Heart left ventricle (tissue), 16 donors: ENCODE measurements at regions of chr17 and their contacts with region 1.

Region 1: GRCh38 chr17:6098050-6098822 is 28.1 kb downstream of the WSCD1 start:
- DNase-seq: peak in 4 of 5 donors; percentile 41 to 70 (median 61)
- ATAC-seq: peak; percentile 81 to 97 (median 86)
- H3K4me3 ChIP-seq: no peak overlapping the region
- H3K27ac ChIP-seq: peak overlapping the region in 11 of 12 donors; percentile 43 to 81 (median 71)
- H3K4me1 ChIP-seq: peaks cover 0 to 31% (median 8%) of the 10 kb centered on the region in 12 donors
- H3K27me3 ChIP-seq: peaks cover 0 to 4% (median 0%) of the 10 kb centered on the region in 9 donors
- CTCF ChIP-seq: no peak
- POLR2A ChIP-seq: no peak

Region 2: DNA sequence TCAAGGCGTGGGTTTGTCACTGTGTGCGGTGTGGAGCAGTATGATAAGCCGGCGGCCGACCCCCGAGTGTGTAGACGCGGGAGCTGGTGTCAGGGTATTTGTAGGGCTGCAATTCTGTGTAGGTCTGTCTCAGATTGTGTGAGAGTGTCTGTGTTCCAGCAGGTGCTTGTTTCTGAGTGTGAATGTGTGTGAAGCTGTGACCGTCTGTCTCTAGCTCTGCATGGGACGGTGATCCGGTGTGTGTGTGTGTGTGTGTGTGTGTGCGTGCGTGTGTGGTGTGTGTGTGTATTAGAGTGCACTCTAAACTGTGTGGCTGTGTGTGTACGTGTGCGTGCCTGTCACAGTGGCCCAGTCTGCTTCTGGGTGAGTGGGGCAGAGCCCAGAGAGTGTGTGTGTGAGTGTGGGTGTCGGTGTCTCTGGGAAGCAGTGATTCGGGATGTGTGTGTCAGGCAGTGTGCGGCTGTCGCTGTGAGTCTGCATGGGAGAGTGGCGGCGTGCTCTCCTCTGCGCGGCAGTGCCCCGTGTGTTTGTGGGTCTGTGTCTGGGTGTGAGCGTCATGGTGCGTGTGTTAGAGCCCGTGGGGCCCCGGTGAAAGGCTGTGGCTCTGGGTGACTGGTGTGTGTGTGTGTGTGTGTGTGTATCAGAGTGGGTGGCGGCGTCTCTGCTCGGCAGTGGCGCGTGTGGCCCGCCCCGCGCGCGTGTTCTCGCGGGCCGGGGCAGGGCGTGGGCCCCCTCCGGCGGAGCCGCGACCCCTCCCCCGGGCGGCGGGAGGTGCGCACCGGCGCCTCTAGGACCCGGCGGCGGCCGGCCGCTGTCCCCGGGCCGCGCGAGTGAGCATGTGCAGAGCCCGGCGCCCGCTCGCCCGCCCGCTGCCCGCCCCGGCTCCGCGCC is 28.5 kb before region 1 on chr17 and contains the start of gene WSCD1:
- intact Hi-C with region 1: loop called in 1 of 10 experiments (anchors 2 kb)
- DNase-seq: peak in 1 of 5 donors; percentile 39
- ATAC-seq: peak; percentile 20 to 74 (median 64)
- H3K4me3 ChIP-seq: peak within 1 kb of the TSS; percentile 42 to 88 (median 64)
- H3K27ac ChIP-seq: peak within 1 kb of the TSS in 4 of 12 donors; percentile 10 to 67 (median 49)
- H3K4me1 ChIP-seq: peaks cover 0 to 20% (median 0%) of the 10 kb centered on the region in 12 donors
- H3K27me3 ChIP-seq: peaks cover 0 to 41% (median 3%) of the 10 kb centered on the region in 9 donors
- CTCF ChIP-seq: no peak
- POLR2A ChIP-seq: no peak
- total RNA-seq, gene WSCD1: 3.6 to 12.4 (median 5.3) TPM

Region 3: GRCh38 chr17:6323582-6324356 is 225.5 kb after region 1 on chr17:
- intact Hi-C with region 1: loop called in 4 of 10 experiments (anchors 1 to 10 kb)
- DNase-seq: peak in 2 of 5 donors; percentile 26 to 33
- ATAC-seq: peak in 1 of 4 donors; percentile 61
- H3K4me3 ChIP-seq: peak overlapping the region in 1 of 12 donors; percentile 11
- H3K27ac ChIP-seq: peak overlapping the region in 7 of 12 donors; percentile 4 to 59 (median 39)
- H3K4me1 ChIP-seq: peaks cover 0 to 40% (median 8%) of the 10 kb centered on the region in 12 donors
- H3K27me3 ChIP-seq: no peaks in the 10 kb centered on the region
- CTCF ChIP-seq: no peak
- POLR2A ChIP-seq: no peak

Region 4: DNA sequence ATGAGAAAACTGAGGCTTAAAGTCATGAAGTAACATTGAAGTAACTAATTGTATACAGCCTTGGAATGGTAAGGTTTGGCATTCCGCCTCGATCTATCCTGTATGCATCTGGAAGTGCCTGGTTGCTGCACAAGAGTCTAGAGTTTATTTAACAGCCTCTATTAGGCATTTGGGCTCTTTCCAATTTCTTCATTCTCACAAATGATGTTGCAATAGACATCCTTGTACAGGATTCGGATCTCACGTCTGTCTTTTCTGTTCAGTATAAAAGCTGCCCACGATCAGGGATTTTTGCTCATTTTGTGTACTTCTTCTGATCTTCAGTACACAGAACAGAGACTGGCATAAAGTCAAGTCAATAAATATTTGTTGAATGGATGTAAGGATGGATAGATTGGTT is 236.2 kb after region 1 on chr17:
- intact Hi-C with region 1: loop called in 5 of 10 experiments (anchors 5 to 10 kb)
- DNase-seq: no peak
- ATAC-seq: no peak
- H3K4me3 ChIP-seq: no peak overlapping the region
- H3K27ac ChIP-seq: no peak overlapping the region
- H3K4me1 ChIP-seq: no peaks in the 10 kb centered on the region
- H3K27me3 ChIP-seq: no peaks in the 10 kb centered on the region
- CTCF ChIP-seq: no peak
- POLR2A ChIP-seq: no peak